Calu3 (cell line): ENCODE measurements at regions of chr2 and their contacts with region 1.

Region 1: GRCh38 chr2:113977660-113978523 is 88.0 kb downstream of the ACTR3 start:
- DNase-seq: peak; percentile 85
- H3K4me3 Mint-ChIP-seq: peak overlapping the region; percentile 32
- H3K27ac Mint-ChIP-seq: peak overlapping the region; percentile 97
- H3K4me1 Mint-ChIP-seq: peaks cover 48% of the 10 kb centered on the region
- H3K27me3 Mint-ChIP-seq: no peaks in the 10 kb centered on the region
- CTCF ChIP-seq: peak; percentile 52

Region 2: DNA sequence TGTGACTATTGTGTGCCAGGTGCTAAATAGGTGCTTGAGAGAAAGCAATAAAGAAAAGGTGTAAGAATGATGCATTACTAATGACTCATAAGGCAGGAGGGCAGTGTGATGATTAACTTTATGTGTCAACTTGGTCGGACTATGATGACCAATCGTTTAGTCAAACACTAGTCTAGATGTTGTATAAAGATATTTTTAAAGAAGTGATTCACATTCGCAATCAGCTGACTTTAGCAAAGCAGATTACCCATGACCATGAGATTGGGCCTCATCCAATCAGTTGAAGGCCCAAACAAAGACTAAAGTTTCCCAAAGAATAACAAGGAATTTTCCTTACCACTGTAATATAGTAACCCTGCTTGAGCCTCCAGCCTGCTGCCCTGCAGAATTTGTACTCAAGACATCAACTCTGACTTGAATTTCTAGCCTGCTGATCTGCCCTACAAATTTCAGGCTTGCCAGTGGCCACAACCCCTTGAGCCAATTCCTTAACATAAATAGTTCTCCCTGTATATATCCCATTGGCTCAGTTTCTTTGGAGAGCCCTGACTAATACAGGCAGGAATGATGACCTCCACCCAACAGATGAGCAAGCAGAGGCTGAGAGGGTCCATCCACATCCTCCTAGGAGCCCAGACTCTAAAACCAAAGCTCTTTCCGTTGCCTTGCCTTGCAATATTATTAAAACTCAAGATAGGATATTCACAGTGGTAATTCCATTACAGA is 44.6 kb after region 1 on chr2:
- CTCF ChIA-PET with region 1: interaction called, 7 read pairs
- intact Hi-C with region 1: loop called (anchors 1 kb)
- DNase-seq: peak; percentile 60
- H3K4me3 Mint-ChIP-seq: no peak overlapping the region
- H3K27ac Mint-ChIP-seq: no peak overlapping the region
- H3K4me1 Mint-ChIP-seq: no peaks in the 10 kb centered on the region
- H3K27me3 Mint-ChIP-seq: no peaks in the 10 kb centered on the region
- CTCF ChIP-seq: no peak

Region 3: DNA sequence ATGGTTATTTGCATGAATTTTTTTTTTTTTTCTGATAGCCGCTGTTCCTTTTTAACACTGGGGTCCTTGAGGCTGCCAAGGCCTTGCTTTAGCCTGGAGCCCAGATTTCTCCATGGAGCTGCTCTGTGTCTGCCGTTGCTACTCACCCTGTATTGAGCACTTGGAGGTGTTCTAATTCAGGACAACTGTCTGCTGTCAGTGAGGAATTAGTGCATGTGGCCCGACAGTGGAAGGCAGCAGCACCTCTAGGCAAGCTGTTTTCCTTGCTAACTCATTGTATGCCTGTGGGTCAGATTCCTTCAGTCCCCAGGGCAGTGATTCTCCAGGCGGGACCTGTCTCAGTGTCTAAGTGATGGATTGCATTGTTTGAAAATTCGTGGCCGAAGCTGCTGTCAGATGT is 316.8 kb after region 1 on chr2:
- CTCF ChIA-PET with region 1: no interaction called
- intact Hi-C with region 1: loop called (anchors 10 kb)
- DNase-seq: no peak
- H3K4me3 Mint-ChIP-seq: no peak overlapping the region
- H3K27ac Mint-ChIP-seq: no peak overlapping the region
- H3K4me1 Mint-ChIP-seq: no peaks in the 10 kb centered on the region
- H3K27me3 Mint-ChIP-seq: peaks cover 20% of the 10 kb centered on the region
- CTCF ChIP-seq: no peak

Region 4: GRCh38 chr2:114400890-114401289 is 423.0 kb after region 1 on chr2:
- CTCF ChIA-PET with region 1: no interaction called
- intact Hi-C with region 1: loop called (anchors 10 kb)
- DNase-seq: no peak
- H3K4me3 Mint-ChIP-seq: no peak overlapping the region
- H3K27ac Mint-ChIP-seq: no peak overlapping the region
- H3K4me1 Mint-ChIP-seq: no peaks in the 10 kb centered on the region
- H3K27me3 Mint-ChIP-seq: no peaks in the 10 kb centered on the region
- CTCF ChIP-seq: no peak

Region 5: DNA sequence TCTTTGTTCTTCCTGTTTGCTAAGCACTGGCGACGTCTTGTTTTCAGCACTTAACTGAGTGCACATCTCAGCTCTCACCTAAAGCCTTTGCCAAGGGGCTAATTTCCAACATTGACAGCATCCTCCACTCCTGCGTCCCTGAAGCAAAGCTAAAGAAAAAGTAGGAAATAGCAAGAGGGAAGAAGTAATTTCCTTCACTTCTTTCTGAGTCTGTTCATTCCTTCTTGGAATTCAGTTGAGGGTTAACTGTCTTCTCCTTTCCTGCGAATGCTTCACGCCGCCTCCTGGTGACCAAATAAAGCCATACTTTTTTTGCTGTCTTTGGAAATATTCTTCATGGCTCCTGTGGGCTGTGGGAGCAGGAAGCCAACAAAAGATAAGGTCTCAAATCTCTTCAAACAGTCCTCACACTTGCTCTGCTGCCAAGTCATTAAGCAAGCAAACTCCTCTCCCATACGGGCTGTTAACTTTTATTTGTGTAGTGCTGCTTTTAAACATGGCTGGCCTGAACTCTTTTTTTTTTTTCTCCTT is 565.4 kb after region 1 on chr2:
- CTCF ChIA-PET with region 1: interaction called, 4 read pairs
- intact Hi-C with region 1: loop called (anchors 2 kb)
- DNase-seq: peak; percentile 44
- H3K4me3 Mint-ChIP-seq: peak overlapping the region; percentile 56
- H3K27ac Mint-ChIP-seq: peak overlapping the region; percentile 77
- H3K4me1 Mint-ChIP-seq: peaks cover 51% of the 10 kb centered on the region
- H3K27me3 Mint-ChIP-seq: no peaks in the 10 kb centered on the region
- CTCF ChIP-seq: peak; percentile 41

Region 6: DNA sequence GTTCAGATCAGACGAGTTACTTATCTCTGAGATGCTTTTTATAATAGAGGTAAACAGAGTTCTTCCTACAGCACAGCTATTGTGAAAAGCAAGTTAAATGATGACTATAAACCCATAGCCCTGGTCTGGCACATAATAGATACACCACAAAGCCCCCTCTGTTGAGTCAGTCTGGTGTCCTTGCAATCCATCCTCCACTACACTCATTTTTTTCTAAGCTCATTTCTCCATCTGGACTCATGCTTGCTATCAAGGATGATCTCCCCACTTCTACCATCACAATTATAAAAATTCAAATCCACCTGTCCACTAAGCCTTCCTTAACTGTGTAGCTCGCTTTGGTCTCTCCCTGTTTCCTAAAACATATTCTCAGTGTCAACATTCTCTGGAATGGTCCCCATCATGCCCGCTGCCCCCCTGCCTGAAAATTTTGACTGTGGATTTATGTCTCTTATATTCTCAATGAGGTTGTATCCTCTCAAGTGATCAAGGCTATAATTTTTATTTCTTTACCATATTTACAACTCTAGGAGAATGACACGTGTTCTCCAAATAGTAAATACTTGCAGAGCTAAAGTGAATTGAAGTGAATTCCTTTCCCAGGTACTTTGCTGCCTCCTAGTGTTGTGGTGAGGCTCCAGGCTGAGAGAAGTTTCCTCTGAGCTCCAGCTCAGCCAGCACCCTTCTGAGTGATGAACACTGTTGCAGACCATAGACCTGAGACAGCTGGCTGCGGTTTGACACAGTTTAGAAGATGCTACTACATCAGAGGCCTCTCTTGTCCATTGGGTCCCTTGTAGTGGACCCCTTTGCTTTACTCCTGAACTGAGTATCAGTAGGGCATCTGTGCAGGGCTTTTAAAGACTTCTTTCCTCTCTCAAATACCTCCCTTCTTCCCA is 573.3 kb after region 1 on chr2:
- CTCF ChIA-PET with region 1: interaction called, 44 read pairs
- intact Hi-C with region 1: loop called (anchors 1 kb)
- DNase-seq: peak; percentile 71
- H3K4me3 Mint-ChIP-seq: no peak overlapping the region
- H3K27ac Mint-ChIP-seq: peak overlapping the region; percentile 12
- H3K4me1 Mint-ChIP-seq: peaks cover 44% of the 10 kb centered on the region
- H3K27me3 Mint-ChIP-seq: peaks cover 22% of the 10 kb centered on the region
- CTCF ChIP-seq: peak; percentile 78